Left ventricle myocardium superior (tissue), 1 donor: ENCODE measurements at regions of chr10 and their contacts with region 1.

Region 1: GRCh38 chr10:23139677-23140076 is 44.3 kb downstream of the MSRB2 start:
- DNase-seq: no peak
- ATAC-seq: no peak

Region 2: GRCh38 chr10:21870825-21871424 is 1268.8 kb before region 1 on chr10:
- intact Hi-C with region 1: loop called (anchors 5 kb)
- DNase-seq: no peak
- ATAC-seq: no peak